CD8-positive, alpha-beta T cell (primary cell): ENCODE measurements at regions of chr6 and their contacts with region 1.

Region 1: GRCh38 chr6:156953479-156954146 is 176.4 kb downstream of the ARID1B start:
- DNase-seq: peak in 5 of 9 experiments; percentile 33 to 87 (median 67)
- ATAC-seq: peak; percentile 93
- H3K4me3 ChIP-seq: no peak overlapping the region
- H3K4me3 Mint-ChIP-seq: no peak overlapping the region
- H3K27ac ChIP-seq: no peak overlapping the region
- H3K27ac Mint-ChIP-seq: no peak overlapping the region
- H3K4me1 ChIP-seq: peaks cover 30% of the 10 kb centered on the region
- H3K4me1 Mint-ChIP-seq: peaks cover 73% of the 10 kb centered on the region
- H3K27me3 ChIP-seq: no peaks in the 10 kb centered on the region
- H3K27me3 Mint-ChIP-seq: no peaks in the 10 kb centered on the region
- CTCF ChIP-seq: peak; percentile 45

Region 2: GRCh38 chr6:156564127-156564806 is 389.3 kb before region 1 on chr6:
- CTCF ChIA-PET with region 1: no interaction called
- POLR2A ChIA-PET with region 1: no interaction called
- intact Hi-C with region 1: loop called (anchors 5 to 10 kb)
- DNase-seq: peak; percentile 59 to 88 (median 73)
- ATAC-seq: peak; percentile 93
- H3K4me3 ChIP-seq: no peak overlapping the region
- H3K4me3 Mint-ChIP-seq: no peak overlapping the region
- H3K27ac ChIP-seq: no peak overlapping the region
- H3K27ac Mint-ChIP-seq: no peak overlapping the region
- H3K4me1 ChIP-seq: no peaks in the 10 kb centered on the region
- H3K4me1 Mint-ChIP-seq: no peaks in the 10 kb centered on the region
- H3K27me3 ChIP-seq: peaks cover 0 to 3% of the 10 kb centered on the region in 2 experiments
- H3K27me3 Mint-ChIP-seq: peaks cover 6% of the 10 kb centered on the region
- CTCF ChIP-seq: peak; percentile 89

Region 3: DNA sequence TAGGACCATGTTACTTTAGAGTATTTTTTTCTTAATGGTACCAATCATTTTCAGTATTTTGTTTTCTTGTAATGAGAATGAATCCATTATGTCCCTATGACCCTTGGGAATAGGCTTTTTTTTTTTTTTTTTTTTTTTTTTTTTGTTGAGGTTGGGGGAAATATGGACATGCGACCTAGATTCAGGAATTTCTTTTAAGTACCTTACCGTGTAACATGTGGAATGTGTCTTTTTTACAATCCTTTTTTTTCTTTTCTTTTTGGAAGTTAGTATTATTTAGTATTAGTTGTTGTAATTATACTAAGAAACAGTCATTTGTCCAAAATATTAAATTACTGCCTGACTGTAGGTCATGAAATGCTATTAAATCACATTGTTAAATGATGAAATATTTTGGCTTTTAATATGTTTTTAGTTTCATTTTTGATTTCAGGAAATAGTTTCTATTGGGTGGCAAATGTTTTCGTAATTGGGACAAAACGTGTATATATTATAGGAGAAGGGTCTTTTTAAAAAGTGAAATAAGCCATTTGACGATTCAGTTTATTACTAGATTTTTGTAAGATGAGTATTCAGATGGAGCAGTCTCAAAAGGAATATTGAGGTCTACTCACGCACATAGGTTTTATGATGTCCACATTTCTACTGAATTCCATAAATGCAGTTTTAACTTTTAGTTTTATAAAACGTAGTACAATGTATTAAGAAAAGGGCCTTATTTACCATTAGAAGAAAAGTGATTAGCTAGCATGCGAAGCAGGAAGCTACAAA is 171.6 kb before region 1 on chr6:
- CTCF ChIA-PET with region 1: no interaction called
- POLR2A ChIA-PET with region 1: interaction called, 3 read pairs
- intact Hi-C with region 1: loop called (anchors 2 to 5 kb)
- DNase-seq: peak in 2 of 9 experiments; percentile 16 to 51
- ATAC-seq: no peak
- H3K4me3 ChIP-seq: peak overlapping the region; percentile 48 to 76
- H3K4me3 Mint-ChIP-seq: peak overlapping the region; percentile 85
- H3K27ac ChIP-seq: peak overlapping the region; percentile 30 to 86
- H3K27ac Mint-ChIP-seq: peak overlapping the region; percentile 91
- H3K4me1 ChIP-seq: peaks cover 33% of the 10 kb centered on the region
- H3K4me1 Mint-ChIP-seq: peaks cover 58% of the 10 kb centered on the region
- H3K27me3 ChIP-seq: no peaks in the 10 kb centered on the region
- H3K27me3 Mint-ChIP-seq: no peaks in the 10 kb centered on the region
- CTCF ChIP-seq: no peak